PC-3 (cell line): ENCODE measurements at regions of chr11 and their contacts with region 1.

Region 1: DNA sequence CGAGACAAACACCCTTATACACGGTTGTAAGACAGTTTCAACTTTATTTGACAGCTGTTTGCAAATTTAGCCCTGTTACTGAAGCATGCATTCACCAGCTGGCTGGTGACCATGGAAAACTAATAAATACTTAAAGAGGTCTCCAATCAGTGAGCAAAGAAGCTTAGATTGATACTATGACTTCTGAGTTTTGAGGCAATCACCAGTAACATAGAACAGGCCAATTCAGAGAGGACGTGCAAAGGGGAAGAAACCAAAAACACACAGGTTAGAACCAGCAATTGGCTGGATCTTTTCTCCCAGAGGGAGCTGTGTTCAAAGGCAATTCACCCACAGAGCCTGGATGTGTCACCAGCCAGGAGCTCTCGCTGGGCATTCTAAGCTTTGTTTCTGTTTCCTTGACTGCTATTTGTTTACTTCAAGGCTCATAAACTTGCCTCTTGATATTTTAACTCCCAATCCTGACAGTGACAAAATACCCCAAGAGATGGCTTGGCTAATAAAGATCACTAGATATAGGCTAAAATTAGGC is 113.6 kb upstream of the MTMR2 start:
- DNase-seq: peak; percentile 95
- ATAC-seq: peak; percentile 69
- H3K4me3 ChIP-seq: peak overlapping the region; percentile 53
- H3K27ac ChIP-seq: peak overlapping the region; percentile 91
- H3K4me1 ChIP-seq: peaks cover 49% of the 10 kb centered on the region
- H3K27me3 ChIP-seq: no peaks in the 10 kb centered on the region
- CTCF ChIP-seq: peak; percentile 53

Region 2: DNA sequence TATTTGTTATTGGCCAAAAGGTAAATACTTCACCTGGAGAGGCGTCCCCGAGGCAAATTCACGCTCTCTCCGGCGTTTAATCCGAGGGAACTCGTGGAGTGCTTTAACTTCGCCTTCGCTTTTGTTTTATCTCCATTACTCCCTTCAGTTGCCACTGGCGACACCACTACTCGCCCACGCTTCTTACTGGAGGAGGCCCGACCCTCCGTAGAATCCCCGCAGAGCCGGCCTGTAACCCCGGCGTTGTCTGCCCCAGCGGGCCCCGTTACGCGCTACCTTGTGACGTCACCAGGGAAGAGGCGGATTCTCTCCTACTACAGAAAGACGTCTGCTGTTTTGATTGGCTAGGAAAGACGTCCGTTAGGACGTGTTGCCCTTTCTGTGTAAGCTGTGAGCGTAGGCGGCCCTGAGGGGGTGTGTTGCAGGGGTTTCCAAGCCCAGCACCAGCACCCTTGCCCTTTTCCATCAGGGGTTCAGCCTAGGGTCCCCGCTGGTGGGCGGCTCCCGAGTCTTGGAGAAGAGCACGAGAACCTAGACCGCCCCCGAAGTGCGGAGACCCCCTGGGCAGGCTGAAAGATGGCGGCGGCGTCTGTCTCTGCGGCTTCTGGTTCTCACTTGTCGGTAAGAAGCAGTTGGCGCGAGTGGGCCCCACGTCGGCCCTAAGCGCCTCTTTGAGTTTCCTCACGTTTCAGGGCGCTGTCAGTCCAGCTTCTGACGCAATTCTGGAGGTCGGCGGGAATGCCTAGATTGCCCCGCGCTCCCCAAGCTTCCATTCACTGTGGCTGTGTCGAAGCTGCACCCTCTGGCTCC is 247.1 kb before region 1 on chr11 and contains the start of gene CEP57:
- CTCF ChIA-PET with region 1: no interaction called
- POLR2A ChIA-PET with region 1: no interaction called
- intact Hi-C with region 1: loop called (anchors 5 kb)
- DNase-seq: peak; percentile 99
- ATAC-seq: peak; percentile 73
- H3K4me3 ChIP-seq: peak within 1 kb of the TSS; percentile 86
- H3K27ac ChIP-seq: peak within 1 kb of the TSS; percentile 87
- H3K4me1 ChIP-seq: peaks cover 42% of the 10 kb centered on the region
- H3K27me3 ChIP-seq: no peaks in the 10 kb centered on the region
- CTCF ChIP-seq: no peak
- total RNA-seq, gene CEP57: 36.7 and 38.1 TPM in 2 replicates

Region 3: DNA sequence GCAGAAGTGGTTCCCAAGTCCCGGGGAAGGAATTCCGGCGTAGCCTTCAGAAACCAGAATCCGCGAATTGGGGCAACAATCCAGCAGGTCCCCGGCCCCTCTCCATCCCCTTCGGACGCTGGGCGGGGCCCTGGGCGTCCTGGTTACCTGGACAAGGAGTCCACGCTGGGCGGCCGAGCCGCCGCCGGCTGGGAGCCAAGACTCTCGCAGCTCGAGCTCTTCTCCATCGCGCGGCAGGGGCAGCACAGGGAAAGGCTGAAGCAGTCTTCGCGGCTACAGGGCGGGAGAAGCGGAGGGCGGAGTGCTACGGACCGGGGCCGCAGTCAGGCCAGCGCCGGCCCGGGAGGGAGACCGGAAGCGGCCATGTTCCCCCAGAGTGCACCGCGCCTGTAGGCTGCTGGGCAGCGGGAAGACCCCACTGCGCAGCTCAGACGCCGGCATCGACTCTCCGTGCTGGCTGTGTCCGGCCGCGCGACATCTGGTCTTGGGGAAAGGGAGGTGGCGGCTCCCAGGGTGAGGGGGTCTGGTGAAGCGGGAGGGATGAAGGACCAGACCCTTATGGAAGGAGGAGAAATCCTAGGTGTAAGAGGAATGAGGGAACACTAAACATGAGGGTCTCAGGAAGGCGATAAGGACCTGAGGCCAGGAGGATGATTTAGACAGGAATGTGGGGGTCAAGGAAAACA is 113.6 kb before region 1 on chr11 and contains the start of gene MTMR2:
- CTCF ChIA-PET with region 1: interaction called, 3 read pairs
- POLR2A ChIA-PET with region 1: interaction called, 6 read pairs
- intact Hi-C with region 1: loop called (anchors 1 kb)
- DNase-seq: peak; percentile 69
- ATAC-seq: peak; percentile 82
- H3K4me3 ChIP-seq: peak within 1 kb of the TSS; percentile 85
- H3K27ac ChIP-seq: peak within 1 kb of the TSS; percentile 81
- H3K4me1 ChIP-seq: peaks cover 26% of the 10 kb centered on the region
- H3K27me3 ChIP-seq: no peaks in the 10 kb centered on the region
- CTCF ChIP-seq: no peak
- total RNA-seq, gene MTMR2: 31.7 and 32.2 TPM in 2 replicates

Region 4: DNA sequence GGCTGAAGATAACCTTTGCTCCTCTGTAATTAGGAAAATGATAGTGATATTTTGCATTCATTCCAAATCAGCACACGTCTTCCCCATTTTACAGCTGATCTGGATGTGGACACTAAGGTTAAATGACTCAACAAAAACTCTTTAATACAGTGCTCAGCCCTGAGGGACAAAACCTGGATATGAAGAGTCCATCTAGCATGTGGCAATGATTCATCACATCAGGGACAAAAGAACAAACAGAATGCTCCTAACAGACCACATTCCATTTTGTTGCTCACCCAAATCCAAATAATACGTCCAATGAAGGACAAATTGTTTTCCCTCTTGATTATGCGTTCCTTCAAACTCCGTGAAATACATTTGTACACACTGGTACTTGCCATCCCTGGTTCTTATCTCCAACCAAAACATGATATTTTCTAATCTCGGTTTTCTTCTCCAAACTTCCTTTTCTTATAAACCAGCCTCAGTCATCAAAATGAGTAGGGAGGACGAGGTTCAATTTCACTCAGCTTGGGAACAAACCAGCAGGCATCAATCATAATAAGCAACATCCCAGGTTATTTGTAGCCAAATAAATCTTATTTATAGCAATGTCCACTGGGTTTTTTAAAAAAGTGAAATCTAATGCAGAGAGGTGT is 59.8 kb before region 1 on chr11:
- CTCF ChIA-PET with region 1: no interaction called
- POLR2A ChIA-PET with region 1: no interaction called
- intact Hi-C with region 1: loop called (anchors 5 kb)
- DNase-seq: peak; percentile 98
- ATAC-seq: peak; percentile 97
- H3K4me3 ChIP-seq: peak overlapping the region; percentile 17; the same call in 1 of the 2 replicates
- H3K27ac ChIP-seq: peak overlapping the region; percentile 76
- H3K4me1 ChIP-seq: peaks cover 27% of the 10 kb centered on the region
- H3K27me3 ChIP-seq: no peaks in the 10 kb centered on the region
- CTCF ChIP-seq: no peak

Region 5: DNA sequence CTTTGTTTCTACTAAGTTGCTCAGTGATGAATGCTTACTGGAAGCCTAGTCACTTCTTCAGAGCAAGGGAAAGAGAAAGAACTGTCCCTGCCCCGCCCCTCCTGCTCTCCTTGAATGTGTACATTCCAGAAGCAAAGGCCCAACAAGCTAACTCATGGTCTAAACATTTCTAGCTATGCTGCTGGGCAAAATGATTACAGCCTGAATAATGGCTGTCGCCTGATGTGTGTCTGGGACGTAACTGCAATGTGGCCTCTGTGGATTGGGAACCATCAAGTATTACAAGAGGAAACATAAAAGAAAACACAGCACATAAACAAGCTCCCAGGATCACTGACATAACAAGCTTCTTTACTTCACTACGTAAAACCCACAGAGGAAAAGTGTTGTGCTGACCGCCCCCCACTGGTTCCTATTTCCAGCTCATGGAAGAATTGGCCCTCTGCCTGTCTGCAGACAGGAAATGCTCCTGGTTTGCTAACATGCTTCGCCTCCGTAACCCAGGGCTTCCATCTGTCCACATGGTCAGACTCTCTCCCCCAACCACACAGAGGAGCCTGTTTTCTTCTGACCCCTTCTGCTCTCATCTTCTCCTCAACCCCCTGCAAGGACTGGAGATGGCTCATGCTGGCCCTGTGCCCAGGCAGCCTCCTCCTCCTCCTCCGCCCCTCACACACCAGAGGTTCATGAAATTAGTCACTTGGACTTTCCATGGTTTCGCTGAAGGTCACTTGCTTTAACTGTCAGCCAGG is 118.3 kb after region 1 on chr11:
- CTCF ChIA-PET with region 1: interaction called, 12 read pairs
- POLR2A ChIA-PET with region 1: no interaction called
- intact Hi-C with region 1: no loop called
- DNase-seq: peak; percentile 88
- ATAC-seq: peak; percentile 86
- H3K4me3 ChIP-seq: no peak overlapping the region
- H3K27ac ChIP-seq: peak overlapping the region; percentile 80
- H3K4me1 ChIP-seq: peaks cover 34% of the 10 kb centered on the region
- H3K27me3 ChIP-seq: no peaks in the 10 kb centered on the region
- CTCF ChIP-seq: no peak; the same call in 1 of the 2 replicates

Region 6: DNA sequence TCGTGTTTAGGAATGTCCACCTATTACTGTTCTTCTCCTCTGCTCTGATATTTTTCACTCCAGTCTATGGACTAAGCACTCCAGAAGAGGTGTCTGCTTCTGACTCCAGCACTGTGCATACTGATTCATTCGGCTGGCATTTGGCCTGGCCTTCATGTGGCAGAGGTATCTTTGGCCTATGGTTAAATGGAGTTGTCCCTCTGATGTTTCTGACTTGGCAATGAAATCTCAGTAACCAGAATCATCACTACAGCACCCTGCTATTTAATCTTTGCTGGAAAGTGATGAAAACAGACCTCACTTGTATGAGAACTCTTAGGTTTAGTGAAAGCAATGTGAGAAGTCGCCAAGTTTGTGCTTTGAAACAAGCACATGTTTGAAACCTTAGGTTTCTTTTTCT is 150.4 kb after region 1 on chr11:
- CTCF ChIA-PET with region 1: no interaction called
- POLR2A ChIA-PET with region 1: no interaction called
- intact Hi-C with region 1: no loop called
- DNase-seq: peak; percentile 92
- ATAC-seq: peak; percentile 99
- H3K4me3 ChIP-seq: no peak overlapping the region
- H3K27ac ChIP-seq: peak overlapping the region; percentile 59
- H3K4me1 ChIP-seq: peaks cover 28% of the 10 kb centered on the region
- H3K27me3 ChIP-seq: no peaks in the 10 kb centered on the region
- CTCF ChIP-seq: no peak

Region 7: DNA sequence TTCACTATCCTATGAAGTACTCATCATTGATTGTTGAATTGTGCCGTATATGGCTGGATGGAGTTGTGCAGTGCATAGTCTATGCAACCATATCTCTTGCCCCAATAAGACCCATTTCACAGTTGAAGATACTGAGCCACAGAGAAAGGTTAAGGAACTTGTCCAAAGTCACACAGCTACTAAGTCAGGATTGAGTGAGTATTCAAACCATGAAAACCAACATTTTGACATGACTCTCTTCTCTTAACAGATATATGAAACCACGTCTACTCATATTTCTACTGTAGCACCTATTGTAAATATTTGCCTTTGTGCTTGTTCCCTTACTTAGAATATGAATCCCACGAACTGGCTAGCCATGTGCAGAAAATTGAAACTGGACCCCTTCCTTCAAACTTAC is 247.4 kb after region 1 on chr11:
- CTCF ChIA-PET with region 1: no interaction called
- POLR2A ChIA-PET with region 1: interaction called, 14 read pairs
- intact Hi-C with region 1: no loop called
- DNase-seq: peak; percentile 64
- ATAC-seq: peak; percentile 88
- H3K4me3 ChIP-seq: no peak overlapping the region
- H3K27ac ChIP-seq: peak overlapping the region; percentile 21
- H3K4me1 ChIP-seq: peaks cover 38% of the 10 kb centered on the region
- H3K27me3 ChIP-seq: no peaks in the 10 kb centered on the region
- CTCF ChIP-seq: no peak

Region 8: DNA sequence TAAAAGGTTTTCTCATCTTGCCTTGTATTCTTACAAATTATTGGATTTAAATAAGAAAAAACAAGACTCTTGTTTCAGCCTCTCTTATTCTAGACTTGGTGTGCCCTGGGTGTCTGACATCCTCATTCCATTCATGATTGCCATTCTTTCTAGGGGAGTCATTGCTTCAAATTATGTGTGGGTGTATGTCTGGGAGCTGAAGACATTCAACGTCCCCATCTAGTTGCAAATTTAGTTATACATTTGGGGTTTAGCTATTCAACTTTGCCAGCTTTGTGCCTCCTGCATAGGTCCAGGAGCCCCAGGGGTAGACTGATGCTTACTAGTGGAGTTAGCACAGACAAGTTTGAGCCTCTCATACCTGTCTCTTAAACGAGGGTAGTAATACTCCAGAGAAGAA is 287.5 kb after region 1 on chr11:
- CTCF ChIA-PET with region 1: interaction called, 14 read pairs
- POLR2A ChIA-PET with region 1: no interaction called
- intact Hi-C with region 1: no loop called
- DNase-seq: peak; percentile 66
- ATAC-seq: peak; percentile 21
- H3K4me3 ChIP-seq: no peak overlapping the region
- H3K27ac ChIP-seq: no peak overlapping the region
- H3K4me1 ChIP-seq: peaks cover 37% of the 10 kb centered on the region
- H3K27me3 ChIP-seq: no peaks in the 10 kb centered on the region
- CTCF ChIP-seq: no peak